Transverse colon (tissue), 4 donors: ENCODE measurements at regions of chr5 and their contacts with region 1.

Region 1: GRCh38 chr5:6576861-6577501 is 55.9 kb downstream of the NSUN2 start:
- DNase-seq: no peak
- H3K4me3 ChIP-seq: no peak overlapping the region
- H3K27ac ChIP-seq: no peak overlapping the region
- H3K4me1 ChIP-seq: no peaks in the 10 kb centered on the region
- H3K27me3 ChIP-seq: peaks cover 8% of the 10 kb centered on the region
- CTCF ChIP-seq: peak; percentile 23 to 44 (median 31)
- EP300 ChIP-seq: no peak
- POLR2A ChIP-seq: no peak

Region 2: DNA sequence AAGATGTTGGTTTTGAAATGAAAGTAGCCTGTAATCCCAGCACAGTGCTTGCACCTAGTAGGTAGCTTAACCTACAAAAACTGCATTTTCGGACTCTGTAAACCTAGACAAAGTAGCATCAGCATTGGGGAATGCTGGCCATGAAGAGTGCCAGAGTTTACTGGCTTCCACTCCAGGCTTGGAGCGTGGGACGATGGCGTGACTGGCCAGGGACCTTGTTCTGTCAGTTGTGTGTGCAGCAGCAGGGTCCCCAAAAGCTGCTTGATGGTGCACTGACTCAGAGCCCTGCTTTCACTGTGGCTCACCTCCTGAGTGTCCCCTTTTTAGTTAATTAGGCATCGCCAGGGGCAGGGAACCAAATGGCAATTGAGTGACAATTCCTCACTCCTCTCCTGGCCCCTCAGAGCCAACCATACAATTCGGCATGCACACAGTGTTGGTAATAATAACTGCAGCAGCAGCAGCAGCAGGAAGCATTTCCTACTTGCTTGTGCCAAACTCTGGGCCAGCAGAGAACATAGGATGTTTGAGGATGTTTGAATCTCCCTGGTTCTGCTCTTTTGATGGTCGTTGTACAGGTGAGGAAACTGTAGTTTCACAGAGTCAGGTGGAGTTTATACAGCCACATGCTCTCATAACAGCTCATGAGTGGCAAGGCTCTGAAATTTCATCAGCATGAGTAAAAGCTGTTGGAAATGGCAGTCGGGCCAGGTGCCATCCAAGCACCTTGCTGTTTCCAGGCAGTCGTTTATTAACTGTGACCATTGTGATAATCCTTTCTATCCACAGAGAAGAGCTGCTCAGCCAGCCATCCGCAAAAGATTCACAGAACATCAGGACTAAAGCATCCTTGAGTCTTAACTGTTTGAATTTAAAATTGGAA is 124.1 kb before region 1 on chr5:
- in situ Hi-C with region 1: no loop called
- intact Hi-C with region 1: loop called (anchors 10 kb)
- DNase-seq: no peak
- H3K4me3 ChIP-seq: no peak overlapping the region
- H3K27ac ChIP-seq: peak overlapping the region in 2 of 4 donors; percentile 11 to 17
- H3K4me1 ChIP-seq: peaks cover 0 to 7% (median 2%) of the 10 kb centered on the region in 4 donors
- H3K27me3 ChIP-seq: peaks cover 45% of the 10 kb centered on the region
- CTCF ChIP-seq: no peak
- EP300 ChIP-seq: no peak
- POLR2A ChIP-seq: no peak

Region 3: DNA sequence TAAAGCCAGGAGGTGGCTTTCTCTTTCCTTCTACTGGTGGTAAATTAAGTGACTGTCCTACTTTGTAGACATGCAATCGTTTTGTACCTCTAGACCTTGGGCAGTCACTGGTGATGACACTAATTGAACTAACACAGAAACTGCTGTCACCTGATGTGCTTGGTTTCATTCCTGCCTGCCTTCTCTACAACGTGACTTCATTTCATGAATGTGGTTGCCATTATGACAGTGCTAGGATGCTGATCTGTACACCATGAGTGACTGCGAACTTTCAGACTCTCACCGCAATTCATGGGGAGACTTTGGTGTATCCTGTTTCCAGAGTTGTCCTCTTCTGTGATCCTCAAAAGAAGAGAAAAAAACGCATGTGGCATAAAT is 80.8 kb before region 1 on chr5:
- in situ Hi-C with region 1: no loop called
- intact Hi-C with region 1: no loop called
- DNase-seq: no peak
- H3K4me3 ChIP-seq: no peak overlapping the region
- H3K27ac ChIP-seq: no peak overlapping the region
- H3K4me1 ChIP-seq: no peaks in the 10 kb centered on the region
- H3K27me3 ChIP-seq: no peaks in the 10 kb centered on the region
- CTCF ChIP-seq: no peak
- EP300 ChIP-seq: no peak
- POLR2A ChIP-seq: no peak